ENCODE measurements at regions of chr12 and their contacts with region 1.

Region 1: DNA sequence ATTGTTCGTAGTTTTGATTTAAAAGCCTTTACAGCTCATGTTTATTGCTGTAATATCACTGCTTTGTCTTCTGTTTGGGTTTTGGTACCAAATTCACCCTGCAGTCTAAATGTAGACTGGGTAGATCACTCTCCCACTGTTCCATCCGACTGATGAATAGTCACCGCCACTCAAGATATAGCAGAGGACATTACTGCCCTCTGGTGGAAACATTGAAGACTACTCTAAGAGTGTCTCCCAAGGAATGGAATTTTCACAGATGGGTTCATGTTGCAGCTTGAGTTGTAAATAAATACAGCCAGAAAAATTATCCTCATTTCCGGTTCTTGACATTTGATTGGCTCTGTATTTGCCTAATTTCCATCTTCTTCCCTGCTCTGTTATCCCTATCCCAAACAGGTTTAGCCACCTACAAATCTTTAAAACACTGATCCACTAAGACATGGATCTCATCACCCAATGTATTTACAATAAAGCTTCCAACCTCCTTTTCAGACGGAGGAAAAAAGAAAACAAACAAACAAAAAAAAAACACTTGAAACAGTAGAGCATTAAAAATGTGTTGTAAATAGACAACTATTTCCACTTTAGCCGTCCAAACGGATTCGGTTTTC is 198.3 kb upstream of the CPNE8 start:
- DNase-seq: no peak
- ATAC-seq: peak; percentile 52
- H3K4me3 Mint-ChIP-seq: no peak overlapping the region
- H3K27ac Mint-ChIP-seq: no peak overlapping the region
- H3K4me1 Mint-ChIP-seq: no peaks in the 10 kb centered on the region
- H3K27me3 Mint-ChIP-seq: no peaks in the 10 kb centered on the region
- CTCF ChIP-seq: no peak

Region 2: GRCh38 chr12:38906482-38907170 is 197.0 kb before region 1 on chr12:
- CTCF ChIA-PET with region 1: interaction called, 3 read pairs
- POLR2A ChIA-PET with region 1: no interaction called
- intact Hi-C with region 1: loop called (anchors 5 kb)
- DNase-seq: peak; percentile 42
- ATAC-seq: peak; percentile 58
- H3K4me3 Mint-ChIP-seq: peak overlapping the region; percentile 88
- H3K27ac Mint-ChIP-seq: no peak overlapping the region
- H3K4me1 Mint-ChIP-seq: peaks cover 23% of the 10 kb centered on the region
- H3K27me3 Mint-ChIP-seq: peaks cover 24% of the 10 kb centered on the region
- CTCF ChIP-seq: no peak

Region 3: DNA sequence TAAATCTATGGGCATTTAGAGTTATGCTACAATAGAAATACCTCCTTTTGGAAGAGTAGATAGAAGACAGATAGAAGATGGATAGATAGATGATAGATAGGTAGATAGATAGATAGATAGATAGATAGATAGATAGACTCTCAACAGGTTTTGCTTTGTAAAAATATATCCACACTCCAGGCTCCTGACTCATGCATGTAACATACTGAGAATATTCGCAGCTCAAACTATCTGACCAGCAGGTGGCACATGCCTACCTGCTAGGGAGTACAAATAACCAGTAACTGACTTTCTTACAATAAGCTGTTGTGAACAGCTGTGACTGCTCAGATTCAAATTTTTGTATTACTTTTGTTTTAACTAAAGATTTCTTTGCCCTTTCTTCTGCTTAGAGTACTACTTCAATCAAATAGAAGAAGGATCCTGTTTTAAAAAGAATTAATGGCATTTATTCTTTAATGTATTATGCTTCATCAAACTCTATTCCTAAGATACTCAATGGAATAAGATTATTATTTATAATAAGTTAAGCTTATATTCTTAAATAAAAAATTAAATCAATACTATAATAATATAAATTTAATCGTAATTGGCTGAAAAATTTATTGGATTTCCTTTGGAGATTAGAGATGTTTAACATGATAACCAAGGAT is 182.5 kb before region 1 on chr12:
- CTCF ChIA-PET with region 1: interaction called, 6 read pairs
- POLR2A ChIA-PET with region 1: no interaction called
- intact Hi-C with region 1: loop called (anchors 1 kb)
- DNase-seq: no peak
- ATAC-seq: no peak
- H3K4me3 Mint-ChIP-seq: no peak overlapping the region
- H3K27ac Mint-ChIP-seq: no peak overlapping the region
- H3K4me1 Mint-ChIP-seq: no peaks in the 10 kb centered on the region
- H3K27me3 Mint-ChIP-seq: no peaks in the 10 kb centered on the region
- CTCF ChIP-seq: no peak

Region 4: GRCh38 chr12:39186744-39187143 is 83.1 kb after region 1 on chr12:
- CTCF ChIA-PET with region 1: no interaction called
- POLR2A ChIA-PET with region 1: no interaction called
- intact Hi-C with region 1: no loop called
- DNase-seq: no peak
- ATAC-seq: no peak
- H3K4me3 Mint-ChIP-seq: no peak overlapping the region
- H3K27ac Mint-ChIP-seq: no peak overlapping the region
- H3K4me1 Mint-ChIP-seq: no peaks in the 10 kb centered on the region
- H3K27me3 Mint-ChIP-seq: no peaks in the 10 kb centered on the region
- CTCF ChIP-seq: no peak

Region 5: GRCh38 chr12:41008472-41008871 is 1904.8 kb after region 1 on chr12:
- CTCF ChIA-PET with region 1: no interaction called
- POLR2A ChIA-PET with region 1: no interaction called
- intact Hi-C with region 1: no loop called
- DNase-seq: no peak
- ATAC-seq: no peak
- H3K4me3 Mint-ChIP-seq: no peak overlapping the region
- H3K27ac Mint-ChIP-seq: no peak overlapping the region
- H3K4me1 Mint-ChIP-seq: no peaks in the 10 kb centered on the region
- H3K27me3 Mint-ChIP-seq: no peaks in the 10 kb centered on the region
- CTCF ChIP-seq: no peak